Naive thymus-derived CD4-positive, alpha-beta T cell (primary cell): ENCODE measurements at regions of chr6 and their contacts with region 1.

Region 1: GRCh38 chr6:33592411-33593054 is 12.5 kb upstream of the BAK1 start:
- DNase-seq: peak in 8 of 9 donors; percentile 37 to 72 (median 48)
- ATAC-seq: peak; percentile 57
- H3K4me3 ChIP-seq: peak overlapping the region; percentile 60
- H3K4me3 Mint-ChIP-seq: peak overlapping the region; percentile 75 to 89 (median 86)
- H3K27ac ChIP-seq: peak overlapping the region; percentile 66
- H3K27ac Mint-ChIP-seq: peak overlapping the region; percentile 11 to 98 (median 93)
- H3K4me1 ChIP-seq: peaks cover 5% of the 10 kb centered on the region in 2 donors
- H3K4me1 Mint-ChIP-seq: peaks cover 16 to 37% (median 27%) of the 10 kb centered on the region in 7 donors
- H3K27me3 ChIP-seq: no peaks in the 10 kb centered on the region
- H3K27me3 Mint-ChIP-seq: peaks cover 0 to 4% (median 0%) of the 10 kb centered on the region in 5 donors

Region 2: GRCh38 chr6:33607784-33608161 is 15.2 kb after region 1 on chr6:
- CTCF ChIA-PET with region 1: interaction called, 8 read pairs
- POLR2A ChIA-PET with region 1: interaction called, 10 read pairs
- intact Hi-C with region 1: loop called (anchors 2 kb)
- DNase-seq: peak in 1 of 9 donors; percentile 42
- ATAC-seq: peak; percentile 55
- H3K4me3 ChIP-seq: no peak overlapping the region
- H3K4me3 Mint-ChIP-seq: no peak overlapping the region
- H3K27ac ChIP-seq: no peak overlapping the region
- H3K27ac Mint-ChIP-seq: no peak overlapping the region
- H3K4me1 ChIP-seq: no peaks in the 10 kb centered on the region
- H3K4me1 Mint-ChIP-seq: peaks cover 0 to 4% (median 0%) of the 10 kb centered on the region in 7 donors
- H3K27me3 ChIP-seq: no peaks in the 10 kb centered on the region
- H3K27me3 Mint-ChIP-seq: peaks cover 0 to 17% (median 0%) of the 10 kb centered on the region in 5 donors

Region 3: GRCh38 chr6:33620856-33621710 is 28.6 kb after region 1 on chr6 and contains the start of gene ITPR3:
- CTCF ChIA-PET with region 1: interaction called, 4 read pairs
- POLR2A ChIA-PET with region 1: interaction called, 19 read pairs
- intact Hi-C with region 1: loop called in 1 of 2 experiments (anchors 1 kb)
- DNase-seq: peak; percentile 63 to 83 (median 80)
- ATAC-seq: peak; percentile 94
- H3K4me3 ChIP-seq: peak within 1 kb of the TSS; percentile 80
- H3K4me3 Mint-ChIP-seq: peak within 1 kb of the TSS; percentile 91 to 97 (median 96)
- H3K27ac ChIP-seq: peak within 1 kb of the TSS; percentile 97
- H3K27ac Mint-ChIP-seq: peak within 1 kb of the TSS; percentile 82 to 96 (median 94)
- H3K4me1 ChIP-seq: peaks cover 9 to 35% of the 10 kb centered on the region in 2 donors
- H3K4me1 Mint-ChIP-seq: peaks cover 29 to 74% (median 66%) of the 10 kb centered on the region in 7 donors
- H3K27me3 ChIP-seq: no peaks in the 10 kb centered on the region
- H3K27me3 Mint-ChIP-seq: peaks cover 0 to 2% (median 0%) of the 10 kb centered on the region in 5 donors
- total RNA-seq, gene ITPR3: 35.6 to 65.7 (median 47.7) TPM

Region 4: GRCh38 chr6:33633462-33634158 is 41.1 kb after region 1 on chr6:
- CTCF ChIA-PET with region 1: interaction called, 4 read pairs
- POLR2A ChIA-PET with region 1: no interaction called
- intact Hi-C with region 1: loop called in 1 of 2 experiments (anchors 1 kb)
- DNase-seq: peak; percentile 30 to 77 (median 46)
- ATAC-seq: peak; percentile 88
- H3K4me3 ChIP-seq: peak overlapping the region; percentile 43
- H3K4me3 Mint-ChIP-seq: peak overlapping the region; percentile 87 to 94 (median 89)
- H3K27ac ChIP-seq: peak overlapping the region; percentile 56
- H3K27ac Mint-ChIP-seq: peak overlapping the region; percentile 46 to 89 (median 73)
- H3K4me1 ChIP-seq: peaks cover 20 to 32% of the 10 kb centered on the region in 2 donors
- H3K4me1 Mint-ChIP-seq: peaks cover 47 to 79% (median 70%) of the 10 kb centered on the region in 7 donors
- H3K27me3 ChIP-seq: no peaks in the 10 kb centered on the region
- H3K27me3 Mint-ChIP-seq: peaks cover 0 to 3% (median 0%) of the 10 kb centered on the region in 5 donors

Region 5: DNA sequence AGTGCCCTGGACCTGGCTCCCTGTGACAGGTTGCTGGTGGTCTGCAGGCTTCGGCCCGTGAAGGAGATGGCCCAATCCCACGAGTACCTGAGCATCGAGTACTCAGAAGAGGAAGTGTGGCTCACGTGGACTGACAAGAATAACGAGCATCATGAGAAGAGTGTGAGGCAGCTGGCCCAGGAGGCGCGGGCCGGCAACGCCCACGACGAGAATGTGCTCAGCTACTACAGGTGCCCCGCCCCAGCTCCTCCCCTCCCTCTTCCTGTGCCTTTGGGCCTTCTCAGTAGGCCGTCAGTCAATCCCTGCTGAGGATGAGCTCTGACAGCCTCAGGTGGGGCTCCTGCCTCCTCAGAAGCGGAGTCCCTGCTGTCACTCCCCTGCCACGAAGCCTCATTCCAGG is 76.4 kb after region 1 on chr6:
- CTCF ChIA-PET with region 1: interaction called, 4 read pairs
- POLR2A ChIA-PET with region 1: interaction called, 3 read pairs
- intact Hi-C with region 1: loop called in 1 of 2 experiments (anchors 1 kb)
- DNase-seq: peak in 8 of 9 donors; percentile 37 to 80 (median 70)
- ATAC-seq: peak; percentile 91
- H3K4me3 ChIP-seq: no peak overlapping the region
- H3K4me3 Mint-ChIP-seq: peak overlapping the region in 3 of 10 donors; percentile 26 to 49 (median 40)
- H3K27ac ChIP-seq: peak overlapping the region; percentile 62
- H3K27ac Mint-ChIP-seq: peak overlapping the region; percentile 80 to 93 (median 88)
- H3K4me1 ChIP-seq: peaks cover 0 to 12% of the 10 kb centered on the region in 2 donors
- H3K4me1 Mint-ChIP-seq: peaks cover 3 to 19% (median 15%) of the 10 kb centered on the region in 7 donors
- H3K27me3 ChIP-seq: no peaks in the 10 kb centered on the region
- H3K27me3 Mint-ChIP-seq: no peaks in the 10 kb centered on the region

Region 6: DNA sequence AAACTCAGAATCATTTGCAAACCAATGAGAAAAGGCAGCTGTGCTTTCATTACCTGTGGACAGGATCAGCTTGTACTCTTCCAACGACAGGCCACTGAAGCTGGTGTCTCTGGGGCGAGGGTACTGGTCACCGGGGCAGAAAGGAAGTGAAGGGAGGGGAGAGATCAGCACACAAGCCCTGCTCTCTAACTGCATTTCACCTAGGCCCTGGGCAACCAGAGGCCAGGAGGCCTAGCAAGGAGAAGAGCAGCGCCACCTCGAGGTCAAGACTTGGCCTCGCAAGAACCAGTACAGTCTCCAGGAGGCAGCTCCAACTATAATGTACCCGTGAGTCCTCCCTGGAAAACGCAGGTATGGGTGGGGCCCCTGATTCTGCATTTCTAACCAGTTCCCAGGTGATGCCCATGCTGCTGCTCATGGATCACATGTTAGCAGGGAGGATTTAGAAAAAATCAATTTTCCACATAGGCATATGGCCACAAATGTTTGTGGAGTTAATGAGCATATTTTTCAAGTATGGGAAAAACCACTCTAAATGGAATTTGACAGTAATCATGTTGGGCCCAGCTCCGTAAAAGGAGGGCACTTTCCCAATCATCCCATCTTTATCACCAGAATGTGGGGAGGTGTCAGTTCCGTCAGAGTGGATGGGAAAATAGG is 108.0 kb after region 1 on chr6:
- CTCF ChIA-PET with region 1: interaction called, 37 read pairs
- POLR2A ChIA-PET with region 1: interaction called, 9 read pairs
- intact Hi-C with region 1: loop called in 1 of 2 experiments (anchors 1 kb)
- DNase-seq: peak; percentile 51 to 76 (median 71)
- ATAC-seq: peak; percentile 78
- H3K4me3 ChIP-seq: no peak overlapping the region
- H3K4me3 Mint-ChIP-seq: peak overlapping the region in 1 of 10 donors; percentile 32
- H3K27ac ChIP-seq: peak overlapping the region; percentile 38
- H3K27ac Mint-ChIP-seq: peak overlapping the region; percentile 53 to 93 (median 84)
- H3K4me1 ChIP-seq: peaks cover 19 to 37% of the 10 kb centered on the region in 2 donors
- H3K4me1 Mint-ChIP-seq: peaks cover 21 to 59% (median 44%) of the 10 kb centered on the region in 7 donors
- H3K27me3 ChIP-seq: no peaks in the 10 kb centered on the region
- H3K27me3 Mint-ChIP-seq: no peaks in the 10 kb centered on the region

Region 7: DNA sequence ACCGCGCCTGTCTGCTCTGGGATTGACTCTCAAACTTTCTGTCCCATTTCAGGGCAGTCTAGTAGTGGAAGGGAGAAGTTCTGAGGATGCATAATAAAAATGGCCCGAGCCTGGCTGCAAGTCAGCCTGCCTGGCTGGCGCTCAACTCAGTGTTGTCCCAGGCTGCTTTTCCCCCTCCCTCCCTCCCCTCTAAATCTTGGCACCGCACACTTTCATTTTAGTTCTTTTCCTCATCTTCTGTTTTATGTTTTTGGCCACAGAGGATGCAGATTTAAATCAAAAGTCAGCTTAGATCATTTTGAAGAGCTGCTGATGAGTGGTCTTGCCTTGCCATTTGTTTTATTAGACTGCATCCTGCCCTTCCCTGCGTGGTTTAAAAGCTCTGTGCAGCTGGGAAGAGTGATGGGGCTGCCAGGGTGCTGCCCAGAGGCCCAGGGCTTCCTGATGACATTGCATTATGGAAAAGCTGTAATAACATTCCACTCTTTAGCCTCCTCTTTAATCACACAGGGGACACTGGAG is 125.5 kb after region 1 on chr6:
- CTCF ChIA-PET with region 1: no interaction called
- POLR2A ChIA-PET with region 1: no interaction called
- intact Hi-C with region 1: no loop called
- DNase-seq: no peak
- ATAC-seq: no peak
- H3K4me3 ChIP-seq: no peak overlapping the region
- H3K4me3 Mint-ChIP-seq: no peak overlapping the region
- H3K27ac ChIP-seq: no peak overlapping the region
- H3K27ac Mint-ChIP-seq: no peak overlapping the region
- H3K4me1 ChIP-seq: peaks cover 0 to under 1% of the 10 kb centered on the region in 2 donors
- H3K4me1 Mint-ChIP-seq: peaks cover 0 to 6% (median 2%) of the 10 kb centered on the region in 7 donors
- H3K27me3 ChIP-seq: no peaks in the 10 kb centered on the region
- H3K27me3 Mint-ChIP-seq: peaks cover 0 to 37% (median 5%) of the 10 kb centered on the region in 5 donors